Dorsolateral prefrontal cortex (tissue), 120 donors: ENCODE measurements at regions of chr22 and their contacts with region 1.

Region 1: DNA sequence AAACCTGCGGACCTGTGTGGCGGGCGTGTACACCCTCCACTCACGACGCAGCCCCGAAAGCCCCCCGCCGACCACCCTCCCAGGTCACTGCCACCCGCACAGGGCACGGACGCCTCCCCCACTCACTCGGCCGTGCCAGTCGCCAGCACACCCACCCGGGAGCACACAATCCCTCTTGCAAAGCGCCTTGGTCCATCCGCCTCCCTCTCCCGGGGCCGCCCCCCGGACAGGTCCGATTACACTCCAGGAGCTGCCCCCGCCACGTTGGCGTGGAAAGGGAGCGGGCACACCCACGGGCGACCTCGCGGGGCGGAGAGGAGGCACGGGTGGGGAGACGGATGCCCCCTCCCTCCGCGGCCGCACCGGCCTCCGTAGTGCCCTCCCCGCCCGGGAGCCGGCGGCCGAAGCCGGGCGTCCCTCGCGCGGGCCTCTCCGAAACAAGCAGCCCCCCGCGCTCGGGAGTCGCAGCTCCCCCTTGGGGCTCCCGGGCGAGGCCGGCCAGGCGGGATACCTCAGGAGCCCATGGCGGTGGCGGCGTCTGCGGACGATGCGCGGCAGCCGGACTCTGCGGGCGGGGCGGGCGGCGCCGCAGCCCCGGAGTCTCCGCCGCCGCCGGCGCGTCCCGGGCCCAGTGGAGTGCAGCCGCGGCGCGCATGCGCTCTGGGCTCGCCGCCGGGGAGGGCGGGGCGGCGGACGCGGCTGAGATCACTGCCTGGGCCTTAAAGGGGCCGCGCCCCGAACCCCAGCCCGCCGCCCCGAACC is at the start of gene TMEM184B:
- DNase-seq: peak; percentile 62 to 92 (median 75)
- H3K4me3 ChIP-seq: peak within 1 kb of the TSS; percentile 74 to 100 (median 97)
- H3K27ac ChIP-seq: peak within 1 kb of the TSS; percentile 88 to 100 (median 98)
- H3K27me3 ChIP-seq: no peaks in the 10 kb centered on the region
- CTCF ChIP-seq: peak in 5 of 56 donors; percentile 6 to 12 (median 8)
- total RNA-seq, gene TMEM184B: 99.7 to 274 (median 141) TPM

Region 2: GRCh38 chr22:38214256-38215056 is 58.1 kb before region 1 on chr22:
- intact Hi-C with region 1: no loop called
- DNase-seq: peak in 8 of 10 donors; percentile 50 to 72 (median 60)
- H3K4me3 ChIP-seq: peak overlapping the region in 50 of 59 donors; percentile 1 to 60 (median 39)
- H3K27ac ChIP-seq: peak overlapping the region in 41 of 59 donors; percentile 12 to 75 (median 49)
- H3K27me3 ChIP-seq: no peaks in the 10 kb centered on the region
- CTCF ChIP-seq: peak in 45 of 56 donors; percentile 11 to 57 (median 38)

Region 3: GRCh38 chr22:38239101-38239761 is 33.3 kb before region 1 on chr22:
- intact Hi-C with region 1: loop called in 1 of 2 experiments (anchors 2 kb)
- DNase-seq: peak in 4 of 10 donors; percentile 45 to 79 (median 67)
- H3K4me3 ChIP-seq: peak overlapping the region in 11 of 59 donors; percentile 2 to 30 (median 19)
- H3K27ac ChIP-seq: peak overlapping the region; percentile 52 to 99 (median 96)
- H3K27me3 ChIP-seq: no peaks in the 10 kb centered on the region
- CTCF ChIP-seq: peak in 52 of 56 donors; percentile 29 to 72 (median 52)

Region 4: GRCh38 chr22:38311323-38311620 is 38.7 kb after region 1 on chr22:
- intact Hi-C with region 1: loop called (anchors 2 kb)
- DNase-seq: no peak
- H3K4me3 ChIP-seq: peak overlapping the region in 3 of 59 donors; percentile 7 to 27 (median 16)
- H3K27ac ChIP-seq: peak overlapping the region in 54 of 59 donors; percentile 8 to 100 (median 77)
- H3K27me3 ChIP-seq: no peaks in the 10 kb centered on the region
- CTCF ChIP-seq: no peak

Region 5: DNA sequence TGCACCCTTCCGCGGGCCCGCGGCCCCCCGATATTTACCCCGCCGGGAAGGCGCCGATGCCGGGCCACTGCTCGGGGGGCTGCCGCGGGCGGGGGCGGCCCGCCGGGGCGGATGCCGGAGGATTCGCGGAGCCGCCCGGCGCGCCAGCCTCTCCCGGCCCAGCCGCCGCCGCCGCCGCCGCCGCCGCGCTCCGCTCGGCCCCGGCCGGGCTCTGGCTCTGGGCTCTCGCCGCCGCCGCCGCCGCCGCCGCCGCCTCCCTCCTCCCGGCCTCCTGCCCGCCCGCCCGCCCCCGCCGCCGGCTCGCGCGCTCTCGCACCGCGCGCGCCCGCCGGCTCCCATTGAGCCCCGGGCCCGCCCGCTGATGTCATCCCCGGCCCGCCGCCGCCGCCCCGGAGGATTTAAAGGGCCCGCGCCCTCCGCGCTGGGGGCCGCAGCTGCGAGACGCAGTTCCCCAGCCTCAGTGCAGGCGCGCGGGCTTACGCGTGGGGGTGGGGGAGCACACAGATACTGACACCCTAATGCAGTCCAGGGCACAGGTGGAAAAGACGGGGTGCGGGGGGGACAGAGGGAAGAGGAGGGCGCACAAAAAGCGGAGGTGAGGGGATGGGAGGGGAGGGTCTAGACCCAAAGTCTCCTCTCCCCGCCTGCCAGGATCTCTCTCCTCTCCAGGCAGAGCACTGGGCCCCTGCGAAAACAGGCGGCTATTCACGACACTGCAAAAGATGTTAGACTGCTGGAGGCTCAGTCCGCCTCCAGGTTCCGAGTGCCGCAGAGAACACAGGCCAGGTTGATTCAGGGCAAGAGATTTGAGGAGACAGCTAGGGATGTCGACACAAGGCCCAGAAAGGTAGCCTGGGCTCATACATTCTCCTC is 44.8 kb after region 1 on chr22 and contains the start of gene CSNK1E:
- intact Hi-C with region 1: loop called (anchors 1 to 2 kb)
- DNase-seq: peak; percentile 74 to 88 (median 82)
- H3K4me3 ChIP-seq: peak within 1 kb of the TSS; percentile 53 to 96 (median 85)
- H3K27ac ChIP-seq: peak within 1 kb of the TSS; percentile 94 to 100 (median 99)
- H3K27me3 ChIP-seq: no peaks in the 10 kb centered on the region
- CTCF ChIP-seq: no peak
- total RNA-seq, gene CSNK1E: 150 to 281 (median 197) TPM

Region 6: GRCh38 chr22:38442967-38443627 is 170.5 kb after region 1 on chr22:
- intact Hi-C with region 1: no loop called
- DNase-seq: no peak
- H3K4me3 ChIP-seq: no peak overlapping the region
- H3K27ac ChIP-seq: peak overlapping the region in 46 of 59 donors; percentile 9 to 77 (median 57)
- H3K27me3 ChIP-seq: no peaks in the 10 kb centered on the region
- CTCF ChIP-seq: no peak